PC-3 (cell line): ENCODE measurements at regions of chr17 and their contacts with region 1.

Region 1: DNA sequence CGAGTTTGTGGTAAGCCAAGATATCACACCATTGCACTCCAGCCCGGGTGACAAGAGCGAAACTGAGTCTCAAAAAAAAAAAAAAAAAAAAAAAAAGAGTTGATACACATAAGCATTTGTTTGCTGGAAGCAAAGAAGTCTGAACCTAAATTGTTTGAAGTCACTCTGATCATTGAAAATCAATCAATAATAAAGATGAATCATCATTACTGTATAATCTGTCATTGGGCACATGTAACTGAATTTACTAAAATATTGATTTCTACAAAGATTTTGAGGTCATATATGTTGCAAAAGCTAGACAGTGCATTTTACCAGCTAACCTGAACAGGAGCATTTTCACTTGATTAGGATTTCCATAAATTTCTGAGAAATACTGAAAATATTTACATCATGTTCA is 34.6 kb upstream of the NOL11 start:
- DNase-seq: no peak
- ATAC-seq: no peak
- H3K4me3 ChIP-seq: no peak overlapping the region
- H3K27ac ChIP-seq: no peak overlapping the region
- H3K4me1 ChIP-seq: no peaks in the 10 kb centered on the region
- H3K27me3 ChIP-seq: no peaks in the 10 kb centered on the region
- CTCF ChIP-seq: no peak

Region 2: GRCh38 chr17:67456103-67456502 is 227.0 kb before region 1 on chr17:
- CTCF ChIA-PET with region 1: interaction called, 11 read pairs
- POLR2A ChIA-PET with region 1: no interaction called
- intact Hi-C with region 1: no loop called
- DNase-seq: no peak
- ATAC-seq: no peak
- H3K4me3 ChIP-seq: no peak overlapping the region
- H3K27ac ChIP-seq: no peak overlapping the region
- H3K4me1 ChIP-seq: no peaks in the 10 kb centered on the region
- H3K27me3 ChIP-seq: no peaks in the 10 kb centered on the region
- CTCF ChIP-seq: no peak

Region 3: DNA sequence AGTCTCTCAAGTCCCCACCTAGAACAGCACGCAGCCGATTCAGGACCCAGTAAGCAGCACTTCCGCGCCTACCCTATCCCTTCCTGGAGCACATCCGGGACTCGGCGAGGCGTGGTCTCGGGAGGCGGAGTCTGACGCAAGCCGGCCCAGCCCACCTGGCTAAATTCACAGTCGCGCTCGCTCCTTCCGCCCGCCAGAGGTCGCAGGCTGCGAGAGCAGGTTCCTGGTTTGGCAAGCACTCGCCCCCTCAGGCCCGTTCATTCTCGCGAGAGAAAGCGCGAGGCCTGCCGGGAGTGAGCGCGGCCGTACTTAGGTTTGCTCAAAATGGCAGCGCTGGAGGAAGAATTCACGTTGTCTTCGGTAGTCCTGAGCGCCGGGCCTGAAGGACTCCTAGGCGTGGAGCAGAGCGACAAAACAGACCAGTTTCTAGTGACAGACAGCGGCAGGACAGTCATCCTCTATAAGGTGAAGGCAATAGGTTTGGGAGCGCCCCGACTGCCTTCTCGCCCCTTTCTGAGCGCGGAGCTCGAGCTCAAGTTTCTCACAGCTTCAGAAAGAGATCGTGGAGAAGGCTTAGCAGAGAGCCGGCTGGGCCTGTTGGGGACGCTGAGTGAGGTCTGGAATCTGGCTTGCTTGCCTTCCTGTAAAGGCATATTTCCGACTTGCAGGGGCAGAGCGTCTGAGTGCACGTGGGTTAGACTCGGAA is 34.7 kb after region 1 on chr17 and contains the start of gene NOL11:
- CTCF ChIA-PET with region 1: no interaction called
- POLR2A ChIA-PET with region 1: no interaction called
- intact Hi-C with region 1: no loop called
- DNase-seq: peak; percentile 100
- ATAC-seq: peak; percentile 97
- H3K4me3 ChIP-seq: peak within 1 kb of the TSS; percentile 93
- H3K27ac ChIP-seq: peak within 1 kb of the TSS; percentile 79
- H3K4me1 ChIP-seq: peaks cover 22% of the 10 kb centered on the region
- H3K27me3 ChIP-seq: no peaks in the 10 kb centered on the region
- CTCF ChIP-seq: peak; percentile 94
- total RNA-seq, gene NOL11: 80.5 and 96.9 TPM in 2 replicates